ENCODE measurements at regions of chr15 and their contacts with region 1.

Region 1: DNA sequence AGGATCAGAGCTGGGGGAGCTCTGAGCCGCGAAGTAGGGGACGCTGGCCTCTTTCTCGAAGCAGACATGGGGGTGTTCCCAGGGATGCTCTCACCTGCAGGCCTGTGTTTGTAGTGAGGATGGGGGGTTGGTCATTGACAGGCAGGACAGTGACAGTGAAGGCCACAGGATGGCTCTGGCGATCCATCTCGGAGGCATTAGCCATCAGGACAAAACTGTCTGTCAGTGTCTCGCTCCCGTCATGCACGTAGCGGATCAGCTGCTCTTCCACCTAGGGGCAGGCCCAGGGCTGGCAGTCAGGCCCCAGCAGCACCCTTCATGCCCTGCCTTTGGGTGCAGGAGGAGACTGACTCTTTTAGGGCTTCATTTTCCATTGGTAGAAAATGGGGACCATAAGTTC is 28.0 kb downstream of the CSPG4 start:
- DNase-seq: no peak
- ATAC-seq: no peak
- H3K4me3 Mint-ChIP-seq: no peak overlapping the region
- H3K27ac Mint-ChIP-seq: no peak overlapping the region
- H3K4me1 Mint-ChIP-seq: peaks cover 7% of the 10 kb centered on the region
- H3K27me3 Mint-ChIP-seq: peaks cover 4% of the 10 kb centered on the region
- CTCF ChIP-seq: no peak

Region 2: DNA sequence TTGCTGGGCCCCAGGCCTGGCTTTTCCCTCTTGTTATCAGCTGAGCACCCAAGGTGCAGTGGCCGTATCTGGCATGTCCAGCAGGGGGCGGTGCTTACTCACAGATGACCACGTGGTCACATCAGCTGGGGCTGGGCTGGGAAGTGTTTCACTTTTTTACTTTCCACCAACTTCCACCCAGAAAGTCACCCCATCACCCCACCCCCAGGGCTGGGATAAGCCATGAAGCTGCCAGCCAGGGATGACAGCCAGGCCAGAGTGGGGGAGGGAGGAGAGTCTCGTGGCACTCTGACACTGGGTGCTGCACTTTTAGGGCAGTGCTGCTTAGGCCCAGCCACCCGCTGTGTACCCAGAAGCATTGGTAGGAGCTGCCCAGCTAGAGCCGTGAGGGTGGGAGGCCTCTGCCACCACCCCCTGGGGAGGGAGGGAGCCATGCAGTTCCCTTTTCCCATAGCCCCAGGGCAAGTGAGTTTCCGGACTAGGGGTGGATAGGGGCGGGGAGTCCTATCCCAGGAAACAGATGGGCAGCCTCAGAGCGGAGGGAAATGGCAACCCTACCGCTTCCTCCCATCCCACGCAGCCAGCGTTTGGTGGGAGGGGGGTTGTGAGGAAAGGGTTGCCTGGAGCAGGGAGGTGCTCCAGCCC is 655.1 kb before region 1 on chr15:
- CTCF ChIA-PET with region 1: no interaction called
- POLR2A ChIA-PET with region 1: no interaction called
- intact Hi-C with region 1: loop called (anchors 1 kb)
- DNase-seq: peak; percentile 82
- ATAC-seq: peak; percentile 95
- H3K4me3 Mint-ChIP-seq: peak overlapping the region; percentile 61
- H3K27ac Mint-ChIP-seq: no peak overlapping the region
- H3K4me1 Mint-ChIP-seq: peaks cover 20% of the 10 kb centered on the region
- H3K27me3 Mint-ChIP-seq: no peaks in the 10 kb centered on the region
- CTCF ChIP-seq: no peak

Region 3: DNA sequence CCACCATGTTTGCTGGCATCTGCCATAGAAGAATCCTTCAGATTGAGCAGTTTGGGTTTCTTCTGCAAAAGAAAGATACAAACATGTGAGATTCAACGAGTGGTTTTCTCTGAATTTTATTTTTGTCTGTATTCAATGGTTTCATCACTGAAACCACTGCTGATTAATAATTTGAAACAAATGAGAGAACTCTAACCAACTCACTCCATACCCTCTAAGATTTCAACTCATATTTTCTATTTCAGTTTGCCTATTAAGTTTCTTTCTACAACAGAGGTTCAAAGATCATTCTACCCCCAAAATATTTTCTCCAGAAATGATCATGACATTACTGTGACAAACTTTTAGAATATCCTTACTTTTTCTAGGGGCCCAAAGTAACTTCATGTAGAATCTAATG is 277.6 kb before region 1 on chr15:
- CTCF ChIA-PET with region 1: no interaction called
- POLR2A ChIA-PET with region 1: no interaction called
- intact Hi-C with region 1: loop called (anchors 10 kb)
- DNase-seq: no peak
- ATAC-seq: no peak
- H3K4me3 Mint-ChIP-seq: no peak overlapping the region
- H3K27ac Mint-ChIP-seq: no peak overlapping the region
- H3K4me1 Mint-ChIP-seq: no peaks in the 10 kb centered on the region
- H3K27me3 Mint-ChIP-seq: no peaks in the 10 kb centered on the region
- CTCF ChIP-seq: no peak

Region 4: DNA sequence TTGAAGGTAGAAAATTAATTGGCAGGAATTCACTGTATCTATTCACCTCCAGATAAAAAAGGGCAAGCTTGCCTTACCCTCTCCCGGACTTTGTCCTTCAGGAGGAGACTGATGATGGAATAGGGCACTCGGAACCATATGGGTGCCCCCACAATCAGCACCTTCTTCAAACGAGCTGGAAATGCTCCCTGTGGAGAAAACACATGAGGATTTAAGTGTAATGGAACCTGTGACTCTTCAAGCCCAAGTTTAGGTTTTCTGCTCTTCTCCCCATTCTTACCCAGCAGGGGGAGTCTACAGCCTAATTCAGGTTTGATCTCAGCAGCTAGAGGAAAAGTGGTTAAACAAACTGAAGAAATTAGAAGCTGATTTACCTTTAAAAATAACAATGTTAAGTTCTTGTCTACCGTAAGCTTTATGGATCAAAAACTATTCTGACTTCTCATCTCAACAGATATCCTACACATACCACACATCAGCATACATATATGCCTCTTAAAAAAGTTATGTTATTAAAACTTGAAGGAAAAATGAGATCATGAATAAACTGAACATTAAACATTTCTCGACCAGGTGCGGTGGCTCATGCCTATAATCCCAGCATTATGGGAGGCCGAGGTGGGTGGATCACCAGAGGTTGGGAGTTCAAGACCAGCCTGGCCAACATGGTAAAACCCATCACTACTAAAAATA is 175.7 kb before region 1 on chr15:
- CTCF ChIA-PET with region 1: interaction called, 5 read pairs
- POLR2A ChIA-PET with region 1: no interaction called
- intact Hi-C with region 1: loop called (anchors 1 kb)
- DNase-seq: no peak
- ATAC-seq: no peak
- H3K4me3 Mint-ChIP-seq: no peak overlapping the region
- H3K27ac Mint-ChIP-seq: no peak overlapping the region
- H3K4me1 Mint-ChIP-seq: no peaks in the 10 kb centered on the region
- H3K27me3 Mint-ChIP-seq: no peaks in the 10 kb centered on the region
- CTCF ChIP-seq: no peak

Region 5: DNA sequence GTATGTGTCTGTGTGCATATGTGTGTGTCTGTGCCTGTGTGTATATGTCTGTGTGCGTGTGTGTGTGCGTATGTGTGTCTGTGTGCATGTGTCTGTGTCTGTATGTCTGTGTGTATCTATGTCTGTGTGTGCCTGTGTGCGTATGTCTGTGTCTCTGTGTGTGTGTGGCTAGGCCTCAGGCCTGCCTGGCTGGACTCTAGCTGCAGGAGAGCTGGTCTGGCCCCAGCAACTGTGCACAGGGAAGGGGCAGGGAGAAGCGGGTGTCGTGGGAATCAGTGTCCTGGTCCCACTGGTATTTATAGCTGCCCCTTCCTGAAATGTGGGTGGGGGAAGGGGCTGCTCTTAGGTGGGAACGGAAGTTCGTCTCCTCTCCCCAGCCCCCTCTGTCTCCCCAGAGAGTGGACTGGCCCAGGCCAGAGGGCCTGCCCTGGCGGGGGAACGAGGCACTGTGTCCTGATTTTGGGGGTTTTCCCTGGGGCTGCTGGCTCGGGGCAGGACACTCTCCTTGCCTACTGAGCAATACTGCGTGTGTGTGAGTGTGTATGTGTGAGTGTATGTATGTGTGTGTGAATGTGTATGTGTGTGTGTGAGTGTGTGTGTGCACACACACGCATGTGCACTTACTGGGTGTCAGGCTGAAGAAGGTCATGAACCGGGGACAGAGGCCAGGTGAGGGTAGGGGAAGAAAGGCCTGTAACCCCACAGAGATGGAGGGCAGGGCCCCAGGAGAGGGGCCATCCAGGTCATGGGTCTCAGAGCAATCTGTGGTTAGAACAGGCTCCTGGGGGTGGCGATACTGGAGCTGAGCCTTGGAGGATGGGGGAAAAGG is 21.4 kb after region 1 on chr15:
- CTCF ChIA-PET with region 1: no interaction called
- POLR2A ChIA-PET with region 1: no interaction called
- intact Hi-C with region 1: no loop called
- DNase-seq: no peak
- ATAC-seq: no peak
- H3K4me3 Mint-ChIP-seq: no peak overlapping the region
- H3K27ac Mint-ChIP-seq: no peak overlapping the region
- H3K4me1 Mint-ChIP-seq: peaks cover 16% of the 10 kb centered on the region
- H3K27me3 Mint-ChIP-seq: no peaks in the 10 kb centered on the region
- CTCF ChIP-seq: no peak

Region 6: DNA sequence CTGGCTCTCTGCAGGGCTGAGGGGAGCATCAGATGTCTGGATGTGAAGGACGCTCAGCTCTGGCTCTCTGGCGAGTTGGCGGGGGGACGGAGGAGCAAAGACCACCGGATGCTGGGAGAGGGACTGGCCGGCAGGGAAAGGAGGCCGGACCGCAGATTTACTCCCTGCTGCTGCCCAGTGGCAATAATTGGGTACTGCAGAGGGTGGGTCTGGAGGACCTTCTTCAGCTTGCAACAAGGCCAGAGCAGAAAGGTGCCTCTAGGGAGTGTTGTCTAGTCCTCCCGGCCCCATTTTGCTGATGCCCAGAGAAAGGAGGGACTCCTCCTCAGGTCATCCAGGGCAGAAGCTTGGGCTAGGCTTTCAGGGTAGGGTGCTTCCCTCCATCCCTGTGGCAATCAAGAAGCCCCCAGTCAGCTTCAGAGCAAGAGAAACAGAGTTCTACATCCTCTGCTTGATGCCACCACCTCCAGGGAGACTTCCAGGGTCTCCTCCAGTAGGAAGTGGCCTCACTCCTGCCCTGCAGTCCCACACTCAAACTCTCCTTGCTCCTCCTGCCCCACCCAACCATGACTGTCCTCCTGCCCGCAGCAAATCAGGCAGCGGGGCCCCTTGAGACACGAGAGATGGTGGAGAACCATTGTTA is 48.3 kb after region 1 on chr15:
- CTCF ChIA-PET with region 1: no interaction called
- POLR2A ChIA-PET with region 1: no interaction called
- intact Hi-C with region 1: loop called (anchors 1 kb)
- DNase-seq: peak; percentile 48
- ATAC-seq: peak; percentile 78
- H3K4me3 Mint-ChIP-seq: no peak overlapping the region
- H3K27ac Mint-ChIP-seq: no peak overlapping the region
- H3K4me1 Mint-ChIP-seq: peaks cover 19% of the 10 kb centered on the region
- H3K27me3 Mint-ChIP-seq: peaks cover 9% of the 10 kb centered on the region
- CTCF ChIP-seq: no peak

Region 7: DNA sequence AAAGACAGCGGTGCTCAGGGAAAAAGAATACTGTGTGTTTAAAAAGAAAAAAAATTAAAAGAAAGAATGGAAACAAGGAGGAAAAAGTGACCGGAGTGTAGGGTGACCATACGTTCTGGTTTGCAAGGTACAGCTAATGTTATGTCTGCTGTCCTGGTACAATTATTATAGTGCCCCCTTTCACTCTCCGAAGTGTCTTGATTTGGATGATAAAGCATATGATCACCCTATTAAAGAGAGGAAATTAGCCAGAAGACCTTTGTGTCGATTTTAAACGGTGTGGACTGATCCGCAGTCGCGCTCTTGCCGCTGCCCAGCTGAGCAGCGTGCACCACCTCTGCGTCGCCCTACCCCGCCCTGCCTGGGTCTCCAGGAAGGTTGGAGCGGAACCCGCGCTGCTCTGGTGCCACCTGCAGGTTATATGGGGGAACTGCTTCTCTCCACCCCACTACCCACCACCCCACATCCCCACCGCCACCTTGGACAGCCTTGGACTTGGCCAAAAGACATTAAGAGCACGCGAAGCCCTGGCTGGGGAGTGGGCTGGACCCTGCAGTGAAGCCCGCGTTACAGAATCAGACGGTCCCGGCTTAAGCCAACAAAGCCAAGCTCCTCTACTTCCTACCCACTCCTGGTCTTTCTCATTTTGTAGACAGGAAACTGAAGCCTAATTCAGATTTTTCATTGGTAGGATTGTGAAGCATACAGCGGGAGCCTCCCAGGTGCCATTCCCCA is 117.4 kb after region 1 on chr15:
- CTCF ChIA-PET with region 1: interaction called, 6 read pairs
- POLR2A ChIA-PET with region 1: no interaction called
- intact Hi-C with region 1: loop called (anchors 1 kb)
- DNase-seq: peak; percentile 63
- ATAC-seq: peak; percentile 100
- H3K4me3 Mint-ChIP-seq: peak overlapping the region; percentile 36
- H3K27ac Mint-ChIP-seq: no peak overlapping the region
- H3K4me1 Mint-ChIP-seq: peaks cover 4% of the 10 kb centered on the region
- H3K27me3 Mint-ChIP-seq: peaks cover 45% of the 10 kb centered on the region
- CTCF ChIP-seq: peak; percentile 55